Calu3 (cell line): ENCODE measurements at regions of chr1 and their contacts with region 1.

Region 1: GRCh38 chr1:44002606-44003157 is 11.3 kb downstream of the CCDC24 start:
- DNase-seq: no peak
- H3K4me3 Mint-ChIP-seq: no peak overlapping the region
- H3K27ac Mint-ChIP-seq: no peak overlapping the region
- H3K4me1 Mint-ChIP-seq: no peaks in the 10 kb centered on the region
- H3K27me3 Mint-ChIP-seq: no peaks in the 10 kb centered on the region
- CTCF ChIP-seq: peak; percentile 30

Region 2: DNA sequence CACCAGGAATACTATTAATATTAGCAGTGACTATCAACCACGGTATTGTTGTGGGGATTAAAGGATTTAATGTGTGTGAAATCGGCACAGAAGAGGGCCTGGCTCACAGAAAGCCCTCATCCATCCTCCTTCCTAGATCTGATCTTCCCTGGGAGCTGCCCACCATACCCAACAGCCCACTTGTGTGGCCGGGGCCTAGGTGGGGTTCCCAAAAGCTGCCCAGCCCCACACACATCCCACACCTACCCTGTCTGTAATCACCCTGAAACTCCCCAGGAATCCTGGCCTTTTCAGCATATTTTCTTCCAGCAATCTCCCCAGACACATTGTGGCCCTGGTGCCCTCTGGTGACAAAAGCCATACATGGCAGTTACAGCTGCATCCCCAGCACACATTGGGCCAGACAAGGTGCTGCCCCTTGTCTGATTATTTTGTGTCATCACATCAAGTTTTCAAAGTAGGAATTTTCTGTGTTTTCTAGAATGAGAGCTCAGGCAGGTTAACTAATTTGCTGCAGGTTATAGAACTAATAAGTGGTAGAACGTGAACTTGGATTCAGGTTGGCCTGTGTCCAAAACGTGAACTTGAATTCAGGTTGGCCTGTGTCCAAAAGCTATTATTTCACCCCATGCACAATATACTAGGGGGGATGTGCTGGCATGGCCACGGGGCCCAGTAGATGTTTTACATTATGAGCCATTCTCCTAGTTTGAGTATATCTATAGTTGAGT is 33.9 kb after region 1 on chr1:
- CTCF ChIA-PET with region 1: interaction called, 17 read pairs
- intact Hi-C with region 1: loop called (anchors 1 kb)
- DNase-seq: peak; percentile 82
- H3K4me3 Mint-ChIP-seq: no peak overlapping the region
- H3K27ac Mint-ChIP-seq: no peak overlapping the region
- H3K4me1 Mint-ChIP-seq: peaks cover 26% of the 10 kb centered on the region
- H3K27me3 Mint-ChIP-seq: no peaks in the 10 kb centered on the region
- CTCF ChIP-seq: peak; percentile 58